Posterior cingulate gyrus (tissue), 11 donors: ENCODE measurements at regions of chr6 and their contacts with region 1.

Region 1: GRCh38 chr6:44655412-44656342 is 268.2 kb downstream of the CDC5L start:
- DNase-seq: peak; percentile 35 to 96 (median 78)

Region 2: GRCh38 chr6:44058617-44059358 is 596.9 kb before region 1 on chr6:
- intact Hi-C with region 1: no loop called
- DNase-seq: peak in 1 of 10 donors; percentile 83

Region 3: DNA sequence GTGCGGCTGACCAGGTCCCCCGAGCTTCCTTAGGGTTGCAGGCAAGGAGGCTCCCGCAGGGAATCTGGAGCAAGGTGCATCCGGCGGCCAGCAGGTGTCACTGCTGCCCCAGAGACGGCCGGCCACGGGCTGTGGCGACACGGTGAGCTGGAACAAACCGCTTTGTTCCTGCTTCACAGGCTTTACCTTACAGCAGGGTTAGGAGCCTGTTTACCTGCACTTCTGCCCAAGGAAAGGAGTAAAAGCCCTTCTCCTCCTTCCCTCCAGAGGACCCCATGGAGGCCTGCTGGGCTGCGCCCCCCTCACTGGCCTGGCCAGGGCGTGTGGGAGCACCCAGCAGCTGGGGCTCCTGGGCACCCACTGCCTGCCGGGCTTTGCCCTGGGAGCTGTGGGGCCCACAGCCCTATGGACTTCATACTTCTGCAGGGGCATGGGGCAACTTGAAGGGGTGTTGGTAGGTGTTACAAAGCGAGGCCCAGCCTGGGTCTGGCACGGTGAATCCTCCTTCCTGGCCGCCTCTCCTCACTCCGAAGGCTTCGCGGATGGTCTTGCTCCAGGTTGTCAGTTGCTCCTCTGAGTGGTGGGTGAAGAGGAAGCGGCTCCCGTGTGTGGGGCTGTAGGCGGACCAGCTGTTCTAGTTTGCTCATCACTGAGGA is 179.8 kb before region 1 on chr6:
- intact Hi-C with region 1: loop called (anchors 5 kb)
- DNase-seq: peak; percentile 70 to 98 (median 86)

Region 4: GRCh38 chr6:45421709-45422502 is 766.2 kb after region 1 on chr6:
- intact Hi-C with region 1: loop called (anchors 10 kb)
- DNase-seq: peak in 9 of 10 donors; percentile 45 to 94 (median 60)